Activated CD4-positive, alpha-beta memory T cell treated with anti-CD3 and anti-CD28 coated beads for 36 hours (primary cell): ENCODE measurements at regions of chr11 and their contacts with region 1.

Region 1: DNA sequence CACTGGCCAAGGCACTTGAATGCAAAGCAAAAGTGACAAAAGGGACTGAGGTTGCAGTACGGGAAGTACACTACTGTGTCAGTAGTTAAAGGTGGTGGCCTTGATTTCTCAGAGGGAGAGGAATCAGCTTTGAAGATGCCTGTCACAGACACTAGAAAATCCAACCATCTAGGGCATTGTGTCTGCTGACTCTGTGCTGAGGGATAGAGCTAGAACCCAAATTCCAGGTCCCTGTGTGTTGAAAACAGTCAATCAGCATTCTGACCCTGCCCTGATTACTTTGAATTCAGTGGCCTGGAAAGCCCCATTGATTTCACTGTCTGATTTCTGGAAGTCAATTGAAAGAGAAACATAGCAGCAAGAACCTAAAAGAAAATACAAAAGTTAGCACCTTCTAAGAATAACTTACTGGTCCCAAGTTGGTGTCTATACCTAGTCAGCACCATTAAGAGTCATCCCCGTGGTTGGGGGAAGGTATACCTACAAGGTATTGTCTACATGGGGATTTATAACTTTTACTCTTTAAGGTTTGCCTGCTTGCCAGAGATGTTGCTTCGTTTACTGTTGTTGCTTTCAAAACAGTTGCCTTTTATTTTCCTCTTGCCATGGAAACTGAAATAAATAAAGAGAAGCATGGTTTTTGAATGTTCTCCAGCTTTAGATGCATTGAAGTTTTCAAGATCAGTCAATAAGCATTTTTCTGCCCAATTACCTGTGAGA is 97.3 kb downstream of the PDHX start:
- DNase-seq: peak; percentile 53
- H3K4me3 Mint-ChIP-seq: peak overlapping the region; percentile 58
- H3K27ac Mint-ChIP-seq: peak overlapping the region; percentile 92
- H3K4me1 Mint-ChIP-seq: peaks cover 44% of the 10 kb centered on the region
- H3K27me3 Mint-ChIP-seq: peaks cover 4% of the 10 kb centered on the region

Region 2: GRCh38 chr11:34953955-34954354 is 59.7 kb before region 1 on chr11:
- CTCF ChIA-PET with region 1: no interaction called
- POLR2A ChIA-PET with region 1: no interaction called
- intact Hi-C with region 1: no loop called
- DNase-seq: no peak
- H3K4me3 Mint-ChIP-seq: no peak overlapping the region
- H3K27ac Mint-ChIP-seq: no peak overlapping the region
- H3K4me1 Mint-ChIP-seq: peaks cover 6% of the 10 kb centered on the region
- H3K27me3 Mint-ChIP-seq: no peaks in the 10 kb centered on the region

Region 3: GRCh38 chr11:35030716-35031213 is 17.1 kb after region 1 on chr11:
- CTCF ChIA-PET with region 1: interaction called, 7 read pairs
- POLR2A ChIA-PET with region 1: interaction called, 7 read pairs
- intact Hi-C with region 1: loop called (anchors 1 kb)
- DNase-seq: peak; percentile 68
- H3K4me3 Mint-ChIP-seq: peak overlapping the region; percentile 69
- H3K27ac Mint-ChIP-seq: peak overlapping the region; percentile 90
- H3K4me1 Mint-ChIP-seq: peaks cover 46% of the 10 kb centered on the region
- H3K27me3 Mint-ChIP-seq: no peaks in the 10 kb centered on the region

Region 4: DNA sequence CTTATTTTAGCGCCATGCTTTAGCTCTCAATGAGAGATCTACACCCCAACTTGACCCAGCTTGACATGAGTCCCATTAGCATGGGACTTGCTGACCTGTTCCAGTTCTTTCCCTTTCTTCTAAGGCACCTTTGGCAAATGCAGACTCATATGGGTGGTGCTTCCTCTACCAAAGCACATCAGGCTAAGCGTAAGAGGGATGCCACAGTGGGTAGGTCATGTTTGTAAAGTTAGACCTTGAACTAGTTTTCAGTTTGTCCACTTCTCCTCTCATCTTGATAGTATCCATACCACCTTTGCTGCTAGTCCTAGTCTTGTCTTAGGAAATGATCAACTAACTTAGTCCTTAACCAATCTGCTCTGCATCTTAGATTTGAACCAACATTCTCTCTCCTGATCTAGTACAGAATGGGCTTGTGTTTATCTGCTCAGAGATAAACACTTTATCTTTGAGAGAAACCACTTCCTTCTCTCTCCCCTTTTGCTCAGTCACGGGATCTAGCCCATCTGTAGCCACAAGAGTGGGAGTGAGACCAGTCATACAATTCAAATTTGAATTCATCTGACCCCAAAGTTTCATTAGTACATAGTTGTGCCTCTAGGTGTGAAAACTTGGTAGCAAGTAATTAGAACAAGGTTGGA is 53.2 kb after region 1 on chr11:
- CTCF ChIA-PET with region 1: no interaction called
- POLR2A ChIA-PET with region 1: no interaction called
- intact Hi-C with region 1: loop called (anchors 2 kb)
- DNase-seq: peak; percentile 74
- H3K4me3 Mint-ChIP-seq: no peak overlapping the region
- H3K27ac Mint-ChIP-seq: peak overlapping the region; percentile 52
- H3K4me1 Mint-ChIP-seq: peaks cover 36% of the 10 kb centered on the region
- H3K27me3 Mint-ChIP-seq: no peaks in the 10 kb centered on the region

Region 5: GRCh38 chr11:35126000-35126878 is 112.6 kb after region 1 on chr11:
- CTCF ChIA-PET with region 1: no interaction called
- POLR2A ChIA-PET with region 1: no interaction called
- intact Hi-C with region 1: loop called (anchors 1 kb)
- DNase-seq: peak; percentile 73
- H3K4me3 Mint-ChIP-seq: peak overlapping the region; percentile 41
- H3K27ac Mint-ChIP-seq: peak overlapping the region; percentile 82
- H3K4me1 Mint-ChIP-seq: peaks cover 65% of the 10 kb centered on the region
- H3K27me3 Mint-ChIP-seq: no peaks in the 10 kb centered on the region

Region 6: DNA sequence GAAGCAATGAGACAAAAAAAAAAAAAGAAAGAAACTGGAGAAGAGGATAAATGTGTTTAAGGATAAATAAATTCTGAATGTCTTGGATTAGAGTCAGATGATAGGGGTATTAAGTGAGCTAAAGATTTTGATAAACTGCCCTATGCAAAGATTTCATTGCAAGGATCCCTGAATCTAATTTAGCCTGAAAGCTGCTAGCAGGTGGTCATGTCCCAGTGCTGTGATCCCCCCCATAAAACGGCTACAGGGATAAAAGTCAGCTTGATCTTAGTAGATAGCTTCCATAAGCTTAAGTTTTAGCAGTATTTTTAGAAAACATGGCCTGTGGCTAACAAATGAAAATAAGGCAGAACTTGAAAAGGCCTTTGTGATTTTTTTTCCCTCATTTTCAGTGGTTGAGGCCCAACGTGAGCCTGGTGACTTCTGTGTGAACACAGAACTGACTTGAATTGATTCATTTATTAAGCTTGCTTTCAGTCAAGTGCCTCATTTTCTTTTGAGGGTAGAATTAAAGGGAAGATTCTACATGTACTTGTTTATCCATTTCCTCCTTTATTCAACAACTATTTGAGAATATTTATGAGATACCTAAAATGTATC is 169.8 kb after region 1 on chr11:
- CTCF ChIA-PET with region 1: no interaction called
- POLR2A ChIA-PET with region 1: no interaction called
- intact Hi-C with region 1: no loop called
- DNase-seq: no peak
- H3K4me3 Mint-ChIP-seq: no peak overlapping the region
- H3K27ac Mint-ChIP-seq: peak overlapping the region; percentile 76
- H3K4me1 Mint-ChIP-seq: peaks cover 82% of the 10 kb centered on the region
- H3K27me3 Mint-ChIP-seq: no peaks in the 10 kb centered on the region

Region 7: DNA sequence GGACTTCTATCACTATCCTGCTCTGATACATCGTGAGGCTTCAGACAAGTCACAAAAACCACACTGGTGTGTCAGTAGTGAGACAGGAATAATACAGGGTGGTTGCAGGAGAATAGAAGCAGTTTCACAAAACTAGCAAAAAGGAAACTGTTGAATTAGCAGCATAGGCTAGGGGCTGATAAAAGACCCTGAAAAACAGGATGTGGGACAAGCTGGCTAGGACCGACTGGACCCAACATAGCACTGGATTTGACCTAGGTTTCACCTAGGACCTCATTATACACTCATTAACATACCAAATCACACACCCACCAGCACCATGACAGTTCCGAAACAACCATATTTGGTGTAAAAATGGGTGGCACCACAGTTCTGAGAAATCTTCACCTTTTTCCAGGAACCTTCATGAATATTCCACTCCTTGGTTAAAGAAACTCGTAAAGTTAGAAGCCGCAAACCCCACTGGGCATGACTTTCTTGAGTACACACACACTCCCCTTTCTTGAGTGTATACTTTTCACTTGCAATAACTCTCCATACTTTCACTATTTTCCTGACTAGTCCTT is 329.4 kb after region 1 on chr11:
- CTCF ChIA-PET with region 1: no interaction called
- POLR2A ChIA-PET with region 1: no interaction called
- intact Hi-C with region 1: loop called (anchors 1 kb)
- DNase-seq: peak; percentile 58
- H3K4me3 Mint-ChIP-seq: peak overlapping the region; percentile 42
- H3K27ac Mint-ChIP-seq: peak overlapping the region; percentile 66
- H3K4me1 Mint-ChIP-seq: peaks cover 42% of the 10 kb centered on the region
- H3K27me3 Mint-ChIP-seq: peaks cover 2% of the 10 kb centered on the region